ENCODE measurements at regions of chr19 and their contacts with region 1.

Region 1: DNA sequence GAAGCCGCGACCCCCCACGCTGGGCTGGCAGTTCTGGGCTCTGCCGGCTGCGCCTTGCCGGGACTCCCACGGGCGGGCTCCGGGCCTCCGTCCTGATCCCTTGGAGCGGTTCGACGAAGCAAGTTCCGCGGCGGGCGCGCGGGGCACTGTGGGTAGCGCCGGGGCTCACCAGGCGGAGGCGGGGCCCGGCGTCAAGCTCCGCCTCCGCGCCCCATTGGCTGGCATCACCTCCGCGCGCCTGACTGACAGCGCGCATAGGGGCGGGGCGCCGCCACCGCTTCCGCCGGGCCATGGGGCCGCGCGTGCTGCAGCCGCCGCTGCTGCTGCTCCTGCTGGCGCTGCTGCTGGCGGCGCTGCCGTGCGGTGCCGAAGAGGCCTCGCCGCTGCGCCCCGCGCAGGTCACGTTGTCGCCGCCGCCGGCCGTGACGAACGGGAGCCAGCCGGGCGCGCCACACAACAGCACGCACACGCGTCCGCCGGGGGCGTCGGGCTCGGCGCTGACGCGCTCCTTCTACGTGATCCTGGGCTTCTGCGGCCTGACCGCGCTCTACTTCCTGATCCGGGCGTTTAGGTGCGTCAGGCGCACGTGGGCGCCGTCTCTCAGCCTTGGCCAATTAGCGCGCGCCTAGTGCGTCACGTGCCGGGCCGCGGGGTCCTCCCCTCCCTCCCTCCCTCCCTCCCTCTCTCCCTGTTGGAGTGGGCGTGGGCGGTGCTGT is at the start of gene FAM174C:
- H3K4me3 ChIP-seq: peak within 1 kb of the TSS; percentile 58
- H3K27ac ChIP-seq: peak within 1 kb of the TSS; percentile 98
- H3K4me1 ChIP-seq: peaks cover 14% of the 10 kb centered on the region
- CTCF ChIP-seq: no peak

Region 2: DNA sequence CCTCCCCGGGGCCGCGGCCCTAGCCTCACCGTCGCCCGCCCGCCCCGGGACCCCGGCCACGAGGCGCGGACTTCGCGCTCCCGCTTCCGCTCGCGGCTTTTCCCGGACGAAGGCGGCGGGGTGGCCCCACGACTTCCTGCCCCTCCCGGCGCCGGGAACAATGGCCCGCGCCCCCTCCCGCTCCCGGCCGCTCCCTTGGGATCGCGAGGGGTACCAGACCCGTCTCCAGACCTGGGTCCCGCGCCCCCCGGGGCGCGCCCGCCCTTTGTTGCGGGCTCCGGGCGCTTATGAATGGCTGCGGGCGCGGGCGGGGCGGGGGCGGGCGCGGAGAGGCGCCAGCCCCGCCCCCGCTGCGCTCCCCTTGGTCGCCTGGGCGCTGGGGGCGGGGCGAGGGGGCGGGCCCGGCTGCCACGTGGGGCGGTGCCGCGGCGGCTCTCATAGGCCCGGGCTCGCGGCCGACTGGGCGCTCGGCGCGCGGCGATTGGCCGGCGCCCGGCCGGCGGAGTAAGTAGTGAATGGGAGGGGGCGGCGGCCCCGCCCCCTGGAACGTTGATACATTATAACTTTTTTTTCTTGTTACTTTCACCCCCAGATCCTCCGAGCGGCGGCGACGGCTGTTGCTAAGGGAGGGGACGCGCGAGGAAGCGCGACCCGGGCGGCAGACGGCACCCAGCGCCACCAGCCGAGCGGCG is 26.0 kb before region 1 on chr19:
- CTCF ChIA-PET with region 1: interaction called, 23 read pairs
- POLR2A ChIA-PET with region 1: interaction called, 22 read pairs
- H3K4me3 ChIP-seq: peak overlapping the region; percentile 92
- H3K27ac ChIP-seq: peak overlapping the region; percentile 100
- H3K4me1 ChIP-seq: peaks cover 8% of the 10 kb centered on the region
- CTCF ChIP-seq: peak; percentile 19; the same call in 1 of the 2 replicates

Region 3: DNA sequence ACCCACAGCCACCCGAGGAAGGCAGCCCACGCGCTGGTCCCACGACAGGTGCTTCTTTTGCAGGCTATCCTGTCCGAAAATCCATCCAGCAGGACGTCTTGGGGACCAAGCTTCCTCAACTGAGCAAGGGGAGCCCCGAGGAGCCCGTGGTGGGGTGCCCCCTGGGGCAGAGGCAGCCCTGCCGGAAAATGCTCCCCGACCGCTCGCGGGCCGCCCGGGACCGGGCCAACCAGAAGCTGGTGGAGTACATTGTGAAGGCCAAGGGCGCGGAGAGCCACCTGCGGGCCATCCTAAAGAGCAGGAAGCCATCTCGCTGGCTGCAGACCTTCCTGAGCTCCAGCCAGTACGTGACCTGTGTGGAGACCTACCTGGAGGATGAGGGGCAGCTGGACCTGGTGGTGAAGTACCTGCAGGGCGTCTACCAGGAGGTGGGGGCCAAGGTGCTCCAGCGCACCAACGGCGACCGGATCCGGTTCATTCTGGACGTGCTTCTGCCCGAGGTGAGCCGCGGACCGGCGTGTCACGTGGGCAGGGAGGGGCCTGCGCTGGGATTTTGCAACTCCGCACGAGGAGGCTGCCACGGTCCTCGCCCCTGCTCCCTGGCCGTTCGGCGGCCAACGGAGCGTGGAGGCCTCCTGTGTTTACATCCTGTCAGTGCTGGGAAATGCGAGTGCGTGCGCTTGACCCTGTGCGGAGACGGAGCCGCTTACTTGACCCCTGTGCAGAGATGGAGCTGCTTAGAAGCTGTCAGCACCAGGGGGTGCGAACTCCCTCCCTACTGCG is 95.4 kb after region 1 on chr19:
- CTCF ChIA-PET with region 1: interaction called, 28 read pairs
- POLR2A ChIA-PET with region 1: interaction called, 9 read pairs
- H3K4me3 ChIP-seq: no peak overlapping the region
- H3K27ac ChIP-seq: no peak overlapping the region
- H3K4me1 ChIP-seq: no peaks in the 10 kb centered on the region
- CTCF ChIP-seq: no peak

Region 4: DNA sequence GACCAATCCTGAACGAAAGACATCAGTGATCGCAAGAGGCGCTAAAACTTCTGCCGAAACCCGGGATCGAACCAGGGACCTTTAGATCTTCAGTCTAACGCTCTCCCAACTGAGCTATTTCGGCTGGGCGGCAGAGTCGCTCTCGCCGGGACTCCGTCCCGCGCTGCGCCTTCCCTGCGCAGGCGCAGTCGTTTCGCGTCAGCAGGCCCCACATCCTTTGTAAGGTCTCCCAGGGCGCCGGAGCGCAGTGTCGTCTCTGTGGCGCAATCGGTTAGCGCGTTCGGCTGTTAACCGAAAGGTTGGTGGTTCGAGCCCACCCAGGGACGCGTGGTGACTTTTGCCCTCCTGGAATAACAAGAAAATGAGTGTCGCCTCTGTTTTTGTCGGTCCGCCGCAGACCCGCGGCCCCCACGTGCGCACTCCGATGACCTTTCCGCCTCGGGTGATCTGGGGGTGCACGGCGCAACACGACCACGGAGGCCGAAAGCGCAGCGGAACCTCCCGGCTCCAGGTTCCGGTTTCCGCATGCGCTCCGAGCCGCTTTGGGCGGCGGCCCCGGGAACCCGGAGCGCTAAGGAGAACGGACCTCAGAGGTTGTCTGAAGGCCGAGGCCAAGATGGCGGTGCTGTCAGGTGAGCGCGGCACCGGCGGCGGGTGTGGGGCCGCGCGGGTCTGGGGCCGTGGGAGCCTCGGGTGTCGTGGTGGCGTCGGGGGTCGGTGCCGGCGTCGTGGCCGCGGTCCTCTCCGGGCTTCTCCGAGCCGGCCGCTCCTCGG is 108.1 kb after region 1 on chr19 and contains the start of gene NDUFS7:
- CTCF ChIA-PET with region 1: interaction called, 13 read pairs
- POLR2A ChIA-PET with region 1: interaction called, 4 read pairs
- H3K4me3 ChIP-seq: peak within 1 kb of the TSS; percentile 83
- H3K27ac ChIP-seq: peak within 1 kb of the TSS; percentile 62
- H3K4me1 ChIP-seq: 0 out of 2 replicates have a peak, but pooled peaks cover 3% of the 10 kb centered on the region
- CTCF ChIP-seq: peak; percentile 54